Calu3 (cell line): ENCODE measurements at regions of chr2 and their contacts with region 1.

Region 1: DNA sequence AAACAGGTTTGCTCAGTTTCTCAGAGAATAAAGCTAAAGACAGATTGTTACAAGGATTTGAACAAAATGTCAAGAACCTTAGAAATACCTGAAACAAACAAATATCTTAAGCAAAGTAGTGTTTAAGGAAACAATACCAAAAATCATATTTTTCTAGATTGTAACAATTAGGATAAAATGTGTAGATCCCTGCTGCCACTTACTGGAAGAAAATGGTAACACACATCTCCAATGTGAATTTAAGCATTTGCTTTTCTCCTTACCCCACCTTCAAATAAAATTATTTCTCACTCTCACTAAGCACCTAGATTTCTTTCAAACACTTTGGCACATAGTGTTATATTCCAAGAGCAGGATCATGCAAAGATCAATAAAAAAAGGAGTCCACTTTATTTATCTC is 34.9 kb downstream of the SUCLG1 start:
- DNase-seq: no peak
- H3K4me3 Mint-ChIP-seq: no peak overlapping the region
- H3K27ac Mint-ChIP-seq: no peak overlapping the region
- H3K4me1 Mint-ChIP-seq: peaks cover 11% of the 10 kb centered on the region
- H3K27me3 Mint-ChIP-seq: no peaks in the 10 kb centered on the region
- CTCF ChIP-seq: peak; percentile 45

Region 2: DNA sequence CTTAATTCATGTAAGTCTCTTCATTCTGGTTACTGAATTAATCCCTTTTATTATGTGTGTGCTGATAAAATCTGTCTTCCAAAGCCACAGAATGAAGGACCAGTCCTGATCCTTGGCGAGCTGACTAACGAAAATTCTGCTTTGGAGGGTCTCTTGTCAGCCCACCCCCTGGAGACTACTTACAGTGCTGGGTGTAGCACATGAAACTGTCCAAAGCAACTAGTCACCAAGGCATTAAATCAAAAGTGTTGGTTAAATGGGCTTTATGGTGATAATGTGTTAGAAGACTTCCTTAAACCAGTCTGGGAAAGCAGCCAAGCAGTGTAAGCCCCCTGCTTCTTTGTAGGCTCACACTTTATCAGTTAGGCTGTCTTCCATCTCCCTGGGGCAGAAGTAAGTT is 385.3 kb before region 1 on chr2:
- CTCF ChIA-PET with region 1: interaction called, 4 read pairs
- intact Hi-C with region 1: loop called (anchors 10 kb)
- DNase-seq: no peak
- H3K4me3 Mint-ChIP-seq: no peak overlapping the region
- H3K27ac Mint-ChIP-seq: no peak overlapping the region
- H3K4me1 Mint-ChIP-seq: no peaks in the 10 kb centered on the region
- H3K27me3 Mint-ChIP-seq: no peaks in the 10 kb centered on the region
- CTCF ChIP-seq: no peak

Region 3: GRCh38 chr2:84320940-84321339 is 103.2 kb before region 1 on chr2:
- CTCF ChIA-PET with region 1: no interaction called
- intact Hi-C with region 1: loop called (anchors 10 kb)
- DNase-seq: no peak
- H3K4me3 Mint-ChIP-seq: no peak overlapping the region
- H3K27ac Mint-ChIP-seq: no peak overlapping the region
- H3K4me1 Mint-ChIP-seq: no peaks in the 10 kb centered on the region
- H3K27me3 Mint-ChIP-seq: peaks cover 34% of the 10 kb centered on the region
- CTCF ChIP-seq: no peak

Region 4: GRCh38 chr2:84474175-84474574 is 50.0 kb after region 1 on chr2:
- CTCF ChIA-PET with region 1: no interaction called
- intact Hi-C with region 1: loop called (anchors 5 kb)
- DNase-seq: peak; percentile 56
- H3K4me3 Mint-ChIP-seq: no peak overlapping the region
- H3K27ac Mint-ChIP-seq: peak overlapping the region; percentile 80
- H3K4me1 Mint-ChIP-seq: peaks cover 23% of the 10 kb centered on the region
- H3K27me3 Mint-ChIP-seq: no peaks in the 10 kb centered on the region
- CTCF ChIP-seq: no peak